Heart left ventricle (tissue), 16 donors: ENCODE measurements at regions of chr11 and their contacts with region 1.

Region 1: GRCh38 chr11:33808228-33808828 is 34.0 kb upstream of the FBXO3 start:
- DNase-seq: peak; percentile 81 to 87 (median 84)
- ATAC-seq: peak; percentile 83 to 93 (median 86)
- H3K4me3 ChIP-seq: no peak overlapping the region
- H3K27ac ChIP-seq: no peak overlapping the region
- H3K4me1 ChIP-seq: peaks cover 0 to 7% (median 0%) of the 10 kb centered on the region in 12 donors
- H3K27me3 ChIP-seq: peaks cover 0 to 6% (median 0%) of the 10 kb centered on the region in 9 donors
- CTCF ChIP-seq: peak; percentile 87 to 95 (median 92)
- POLR2A ChIP-seq: no peak

Region 2: DNA sequence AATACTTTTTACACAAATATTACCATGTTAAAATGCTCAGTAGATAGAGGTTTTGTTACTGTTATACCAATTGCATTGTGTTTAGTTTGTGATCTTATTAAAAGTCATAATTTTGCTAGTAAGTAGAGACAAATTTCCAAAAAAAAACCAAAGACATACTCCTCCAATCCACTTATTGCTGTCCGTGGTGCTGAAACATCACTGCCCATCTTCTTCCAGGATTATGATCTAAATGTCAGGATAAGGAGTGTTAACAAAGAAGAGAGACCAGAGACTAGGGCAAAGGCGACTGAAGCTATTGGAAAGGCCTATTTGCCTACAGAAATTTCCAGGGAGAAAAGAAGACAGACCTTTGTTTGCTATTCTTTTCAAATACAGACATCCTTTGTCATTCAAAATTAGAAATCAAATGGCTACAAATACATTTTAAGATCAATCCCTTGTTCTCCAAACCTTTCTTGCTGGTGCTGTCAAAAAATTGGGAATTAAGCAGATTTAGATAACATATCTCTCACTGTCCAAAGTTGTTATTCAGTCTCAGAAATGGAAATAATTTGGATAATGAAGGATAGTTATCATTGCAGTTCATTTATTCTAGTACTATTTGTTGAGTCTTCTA is 307.4 kb before region 1 on chr11:
- intact Hi-C with region 1: no loop called
- DNase-seq: peak in 1 of 5 donors; percentile 10
- ATAC-seq: no peak
- H3K4me3 ChIP-seq: no peak overlapping the region
- H3K27ac ChIP-seq: no peak overlapping the region
- H3K4me1 ChIP-seq: no peaks in the 10 kb centered on the region
- H3K27me3 ChIP-seq: peaks cover 0 to 8% (median 0%) of the 10 kb centered on the region in 9 donors
- CTCF ChIP-seq: no peak
- POLR2A ChIP-seq: no peak

Region 3: GRCh38 chr11:33829433-33830141 is 21.3 kb after region 1 on chr11:
- intact Hi-C with region 1: loop called in 2 of 10 experiments (anchors 1 to 2 kb)
- DNase-seq: peak in 4 of 5 donors; percentile 35 to 52 (median 46)
- ATAC-seq: peak in 3 of 4 donors; percentile 82 to 91 (median 86)
- H3K4me3 ChIP-seq: peak overlapping the region; percentile 21 to 58 (median 49)
- H3K27ac ChIP-seq: no peak overlapping the region
- H3K4me1 ChIP-seq: peaks cover 3 to 10% (median 7%) of the 10 kb centered on the region in 12 donors
- H3K27me3 ChIP-seq: peaks cover 0 to 49% (median 11%) of the 10 kb centered on the region in 9 donors
- CTCF ChIP-seq: peak; percentile 56 to 85 (median 76)
- POLR2A ChIP-seq: no peak

Region 4: DNA sequence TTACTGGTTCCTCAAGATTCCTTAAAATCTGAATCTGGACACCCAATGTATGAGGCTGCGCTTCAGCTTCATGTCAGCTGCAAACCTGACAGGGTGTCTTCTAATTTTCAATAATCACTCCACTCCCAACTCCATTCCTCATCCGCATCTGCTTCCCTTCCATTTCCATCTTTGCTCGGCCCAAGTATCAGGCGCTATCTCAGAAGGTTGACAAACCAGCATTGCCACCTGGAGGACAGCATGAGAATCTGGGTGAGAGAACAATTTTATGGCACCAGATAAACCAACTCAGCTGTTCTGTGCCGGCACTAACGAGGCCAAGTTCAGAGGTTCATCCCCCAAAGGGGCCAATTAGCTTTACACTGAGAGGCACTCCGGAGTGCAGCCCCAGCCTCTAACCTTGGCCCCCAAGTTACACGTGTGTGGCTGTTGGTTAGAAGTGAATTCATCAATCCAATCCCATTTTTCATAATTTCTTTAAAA is 162.7 kb after region 1 on chr11:
- intact Hi-C with region 1: loop called in 2 of 10 experiments (anchors 5 kb)
- DNase-seq: peak in 4 of 5 donors; percentile 42 to 53 (median 48)
- ATAC-seq: peak; percentile 37 to 91 (median 87)
- H3K4me3 ChIP-seq: no peak overlapping the region
- H3K27ac ChIP-seq: no peak overlapping the region
- H3K4me1 ChIP-seq: peaks cover 0 to 5% (median 0%) of the 10 kb centered on the region in 12 donors
- H3K27me3 ChIP-seq: no peaks in the 10 kb centered on the region
- CTCF ChIP-seq: peak; percentile 40 to 78 (median 68)
- POLR2A ChIP-seq: no peak

Region 5: GRCh38 chr11:33987975-33988580 is 179.8 kb after region 1 on chr11:
- intact Hi-C with region 1: loop called in 1 of 10 experiments (anchors 5 kb)
- DNase-seq: peak; percentile 60 to 77 (median 71)
- ATAC-seq: peak in 3 of 4 donors; percentile 84 to 88 (median 86)
- H3K4me3 ChIP-seq: no peak overlapping the region
- H3K27ac ChIP-seq: no peak overlapping the region
- H3K4me1 ChIP-seq: no peaks in the 10 kb centered on the region
- H3K27me3 ChIP-seq: no peaks in the 10 kb centered on the region
- CTCF ChIP-seq: peak; percentile 67 to 92 (median 82)
- POLR2A ChIP-seq: no peak